SK-N-SH (cell line): ENCODE measurements at regions of chr9 and their contacts with region 1.

Region 1: DNA sequence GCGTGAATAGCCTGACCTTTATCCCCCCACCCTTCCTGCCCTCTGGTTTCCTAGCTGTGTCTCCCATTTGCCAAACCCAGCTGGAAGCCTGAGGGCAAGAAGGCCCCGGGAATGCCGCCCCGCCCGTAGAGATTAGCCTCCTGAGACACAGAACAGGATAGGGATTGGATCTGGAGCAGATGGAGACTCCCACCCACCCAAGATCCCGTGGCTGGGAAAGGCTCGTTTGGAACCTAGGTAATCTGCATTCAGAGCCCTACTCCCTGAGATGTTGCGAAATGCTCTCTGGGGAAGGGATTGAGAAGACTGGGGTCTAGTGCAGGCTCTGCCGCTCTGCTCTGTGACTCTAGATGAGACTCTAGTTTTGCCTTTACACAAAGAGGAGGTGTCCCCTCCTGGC is 11.0 kb downstream of the AQP3 start:
- DNase-seq: no peak
- H3K4me3 ChIP-seq: no peak overlapping the region
- H3K27ac ChIP-seq: no peak overlapping the region
- H3K4me1 ChIP-seq: no peaks in the 10 kb centered on the region
- H3K27me3 ChIP-seq: peaks cover 4% of the 10 kb centered on the region; the same call in 1 of the 2 replicates
- CTCF ChIP-seq: no peak
- EP300 ChIP-seq: no peak
- RAD21 ChIP-seq: no peak

Region 2: GRCh38 chr9:33306037-33306436 is 130.4 kb before region 1 on chr9:
- CTCF ChIA-PET with region 1: no interaction called
- POLR2A ChIA-PET with region 1: no interaction called
- DNase-seq: no peak
- H3K4me3 ChIP-seq: no peak overlapping the region
- H3K27ac ChIP-seq: no peak overlapping the region
- H3K4me1 ChIP-seq: no peaks in the 10 kb centered on the region
- H3K27me3 ChIP-seq: no peaks in the 10 kb centered on the region
- CTCF ChIP-seq: no peak
- EP300 ChIP-seq: no peak
- RAD21 ChIP-seq: no peak

Region 3: DNA sequence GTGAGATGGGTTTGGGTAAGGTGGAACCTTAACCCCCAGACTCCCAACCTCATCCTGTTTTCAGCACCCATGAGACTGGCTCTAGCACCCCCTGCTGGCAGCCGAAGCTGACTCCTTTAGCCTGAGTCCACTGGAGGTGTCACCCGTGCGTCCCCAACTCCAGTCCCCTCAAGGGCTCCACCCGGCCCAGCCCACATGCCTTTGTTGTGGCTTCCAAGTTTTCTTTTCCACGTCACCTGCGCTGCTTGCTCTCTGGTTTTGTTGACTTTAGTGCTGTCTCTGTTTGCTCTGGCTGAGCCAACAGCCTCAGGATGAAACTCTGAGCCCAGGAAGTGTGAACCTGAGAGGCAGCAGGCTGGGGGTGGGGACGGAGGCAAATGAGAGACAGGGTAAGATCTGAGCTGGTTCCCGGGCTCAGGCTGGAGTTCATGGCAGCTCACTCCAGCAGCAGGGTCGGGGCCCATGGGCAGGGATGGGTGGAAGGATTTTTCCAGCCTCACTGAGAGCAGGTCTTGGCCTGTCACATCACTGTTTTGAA is 20.9 kb before region 1 on chr9:
- CTCF ChIA-PET with region 1: interaction called, 13 read pairs
- POLR2A ChIA-PET with region 1: interaction called, 3 read pairs
- DNase-seq: peak; percentile 76
- H3K4me3 ChIP-seq: no peak overlapping the region
- H3K27ac ChIP-seq: no peak overlapping the region
- H3K4me1 ChIP-seq: no peaks in the 10 kb centered on the region
- H3K27me3 ChIP-seq: no peaks in the 10 kb centered on the region
- CTCF ChIP-seq: peak; percentile 71
- EP300 ChIP-seq: no peak
- RAD21 ChIP-seq: peak; percentile 54

Region 4: GRCh38 chr9:33446946-33447798 is 10.7 kb after region 1 on chr9 and contains the start of gene AQP3:
- CTCF ChIA-PET with region 1: interaction called, 14 read pairs
- POLR2A ChIA-PET with region 1: no interaction called
- DNase-seq: peak; percentile 88
- H3K4me3 ChIP-seq: peak within 1 kb of the TSS; percentile 37 to 48
- H3K27ac ChIP-seq: no peak within 1 kb of the TSS
- H3K4me1 ChIP-seq: peaks cover 0 to 17% of the 10 kb centered on the region in 2 experiments; a peak in 1 of 4 replicates
- H3K27me3 ChIP-seq: no peaks in the 10 kb centered on the region; the same call in 1 of the 2 replicates
- CTCF ChIP-seq: peak; percentile 15; the same call in 1 of the 2 replicates
- EP300 ChIP-seq: no peak
- RAD21 ChIP-seq: 0 out of 2 replicates have a peak, but pooled peaks have one; percentile 6
- polyA plus RNA-seq, gene AQP3: 0.52 and 0.64 TPM in 2 replicates

Region 5: DNA sequence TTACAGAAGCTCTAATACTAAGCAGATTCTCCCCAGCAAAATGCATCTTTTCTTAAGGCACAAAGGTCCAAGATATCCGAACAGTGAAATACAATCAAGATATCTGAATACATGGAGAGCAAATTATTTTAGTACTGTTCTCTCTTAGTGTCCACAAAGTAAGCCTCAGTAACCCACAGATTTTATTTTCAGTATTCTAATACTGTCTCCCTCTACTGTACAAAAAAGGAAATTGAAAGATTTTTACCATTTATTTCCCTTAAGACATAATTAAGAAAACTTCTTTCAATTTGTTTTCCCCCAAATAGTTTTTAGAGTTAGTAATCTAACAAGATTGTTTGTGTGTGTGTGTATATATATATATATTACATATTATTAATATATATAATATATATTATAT is 61.9 kb after region 1 on chr9:
- CTCF ChIA-PET with region 1: no interaction called
- POLR2A ChIA-PET with region 1: no interaction called
- DNase-seq: no peak
- H3K4me3 ChIP-seq: no peak overlapping the region
- H3K27ac ChIP-seq: no peak overlapping the region
- H3K4me1 ChIP-seq: no peaks in the 10 kb centered on the region
- H3K27me3 ChIP-seq: no peaks in the 10 kb centered on the region
- CTCF ChIP-seq: peak; percentile 58
- EP300 ChIP-seq: no peak
- RAD21 ChIP-seq: no peak